GM12878 (cell line): ENCODE measurements at regions of chr14 and their contacts with region 1.

Region 1: GRCh38 chr14:102117852-102118251 is 21.8 kb upstream of the WDR20 start:
- DNase-seq: no peak
- ATAC-seq: no peak
- H3K4me3 ChIP-seq: no peak overlapping the region
- H3K27ac ChIP-seq: no peak overlapping the region
- H3K4me1 ChIP-seq: no peaks in the 10 kb centered on the region
- H3K27me3 ChIP-seq: no peaks in the 10 kb centered on the region
- CTCF ChIP-seq: no peak
- EP300 ChIP-seq: no peak
- POLR2A ChIP-seq: no peak
- RAD21 ChIP-seq: no peak

Region 2: GRCh38 chr14:102020058-102020971 is 97.5 kb before region 1 on chr14:
- CTCF ChIA-PET with region 1: no interaction called
- POLR2A ChIA-PET with region 1: no interaction called
- RAD21 ChIA-PET with region 1: no interaction called
- SMC1A ChIA-PET with region 1: no interaction called
- in situ Hi-C with region 1: no loop called
- intact Hi-C with region 1: no loop called
- DNase-seq: no peak
- ATAC-seq: no peak
- H3K4me3 ChIP-seq: no peak overlapping the region
- H3K27ac ChIP-seq: no peak overlapping the region
- H3K4me1 ChIP-seq: no peaks in the 10 kb centered on the region
- H3K27me3 ChIP-seq: no peaks in the 10 kb centered on the region
- CTCF ChIP-seq: no peak
- EP300 ChIP-seq: no peak
- POLR2A ChIP-seq: no peak
- RAD21 ChIP-seq: no peak

Region 3: DNA sequence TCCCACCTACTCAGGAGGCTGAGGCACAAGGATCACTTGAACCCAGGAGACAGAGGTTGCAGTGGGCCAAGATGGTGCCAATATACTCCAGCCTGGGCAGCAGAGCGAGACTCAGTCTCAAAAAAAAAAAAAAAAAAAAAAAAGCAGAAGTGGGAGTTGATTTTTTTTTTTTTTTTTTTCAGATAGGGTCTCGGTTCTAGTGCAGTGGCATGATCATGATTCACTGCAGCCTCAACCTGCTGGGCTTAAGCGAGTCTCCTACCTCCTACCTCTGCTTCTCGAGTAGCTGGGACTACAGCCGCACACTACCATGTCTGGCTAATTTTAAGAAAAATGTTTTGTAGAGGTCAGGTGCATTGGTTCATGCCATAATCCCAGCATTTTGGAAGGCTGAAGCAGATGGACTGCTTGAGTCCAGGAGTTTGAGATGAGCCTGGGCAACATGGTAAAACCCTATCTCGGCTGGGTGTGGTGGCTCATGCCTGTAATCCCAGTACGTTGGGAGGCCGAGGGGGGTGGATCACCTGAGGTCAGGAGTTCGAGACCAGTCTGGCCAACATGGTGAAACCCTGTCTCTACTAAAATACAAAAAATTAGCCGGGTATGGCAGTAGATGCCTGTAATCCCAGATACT is 14.7 kb before region 1 on chr14:
- CTCF ChIA-PET with region 1: no interaction called
- POLR2A ChIA-PET with region 1: interaction called, 11 read pairs
- RAD21 ChIA-PET with region 1: no interaction called
- SMC1A ChIA-PET with region 1: interaction called, 4 read pairs
- in situ Hi-C with region 1: no loop called
- intact Hi-C with region 1: no loop called
- DNase-seq: no peak
- ATAC-seq: peak; percentile 94
- H3K4me3 ChIP-seq: no peak overlapping the region
- H3K27ac ChIP-seq: no peak overlapping the region
- H3K4me1 ChIP-seq: peaks cover 10% of the 10 kb centered on the region
- H3K27me3 ChIP-seq: no peaks in the 10 kb centered on the region
- CTCF ChIP-seq: no peak
- EP300 ChIP-seq: no peak
- POLR2A ChIP-seq: no peak
- RAD21 ChIP-seq: no peak